CD8-positive, alpha-beta T cell (primary cell): ENCODE measurements at regions of chr10 and their contacts with region 1.

Region 1: GRCh38 chr10:123796586-123797135 is 94.9 kb downstream of the CPXM2 start:
- DNase-seq: no peak
- ATAC-seq: no peak
- H3K4me3 ChIP-seq: no peak overlapping the region
- H3K4me3 Mint-ChIP-seq: no peak overlapping the region
- H3K27ac ChIP-seq: no peak overlapping the region
- H3K27ac Mint-ChIP-seq: no peak overlapping the region
- H3K4me1 ChIP-seq: no peaks in the 10 kb centered on the region
- H3K4me1 Mint-ChIP-seq: no peaks in the 10 kb centered on the region
- H3K27me3 ChIP-seq: no peaks in the 10 kb centered on the region
- H3K27me3 Mint-ChIP-seq: no peaks in the 10 kb centered on the region
- CTCF ChIP-seq: no peak

Region 2: GRCh38 chr10:122298598-122299301 is 1497.9 kb before region 1 on chr10:
- CTCF ChIA-PET with region 1: no interaction called
- POLR2A ChIA-PET with region 1: no interaction called
- intact Hi-C with region 1: no loop called
- DNase-seq: peak; percentile 44 to 79 (median 67)
- ATAC-seq: peak; percentile 86
- H3K4me3 ChIP-seq: no peak overlapping the region
- H3K4me3 Mint-ChIP-seq: no peak overlapping the region
- H3K27ac ChIP-seq: no peak overlapping the region
- H3K27ac Mint-ChIP-seq: no peak overlapping the region
- H3K4me1 ChIP-seq: peaks cover 10% of the 10 kb centered on the region
- H3K4me1 Mint-ChIP-seq: peaks cover 10% of the 10 kb centered on the region
- H3K27me3 ChIP-seq: no peaks in the 10 kb centered on the region
- H3K27me3 Mint-ChIP-seq: peaks cover 2% of the 10 kb centered on the region
- CTCF ChIP-seq: peak; percentile 85

Region 3: DNA sequence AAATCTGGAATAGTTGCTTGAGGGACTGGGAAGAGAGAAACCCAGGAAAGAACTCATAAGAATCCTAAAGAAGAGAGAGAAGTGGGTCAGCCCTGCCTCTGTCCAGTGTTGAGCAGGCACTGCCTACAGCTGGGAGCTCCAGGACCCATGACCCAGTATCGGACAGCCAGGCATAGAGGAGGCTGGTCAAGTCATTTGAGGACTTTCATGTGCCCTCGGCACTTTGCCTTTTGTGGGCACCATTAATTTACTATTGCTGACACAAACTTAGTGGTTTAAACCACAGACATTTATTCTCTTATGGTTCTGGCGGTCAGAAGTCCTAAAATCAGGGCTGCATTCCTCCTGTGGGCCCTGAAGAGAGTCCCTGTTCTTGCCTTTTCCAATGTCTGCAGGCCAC is 34.6 kb after region 1 on chr10:
- CTCF ChIA-PET with region 1: no interaction called
- POLR2A ChIA-PET with region 1: no interaction called
- intact Hi-C with region 1: loop called in 1 of 2 experiments (anchors 1 kb)
- DNase-seq: no peak
- ATAC-seq: no peak
- H3K4me3 ChIP-seq: no peak overlapping the region
- H3K4me3 Mint-ChIP-seq: no peak overlapping the region
- H3K27ac ChIP-seq: no peak overlapping the region
- H3K27ac Mint-ChIP-seq: no peak overlapping the region
- H3K4me1 ChIP-seq: no peaks in the 10 kb centered on the region
- H3K4me1 Mint-ChIP-seq: no peaks in the 10 kb centered on the region
- H3K27me3 ChIP-seq: no peaks in the 10 kb centered on the region
- H3K27me3 Mint-ChIP-seq: peaks cover 11% of the 10 kb centered on the region
- CTCF ChIP-seq: no peak

Region 4: DNA sequence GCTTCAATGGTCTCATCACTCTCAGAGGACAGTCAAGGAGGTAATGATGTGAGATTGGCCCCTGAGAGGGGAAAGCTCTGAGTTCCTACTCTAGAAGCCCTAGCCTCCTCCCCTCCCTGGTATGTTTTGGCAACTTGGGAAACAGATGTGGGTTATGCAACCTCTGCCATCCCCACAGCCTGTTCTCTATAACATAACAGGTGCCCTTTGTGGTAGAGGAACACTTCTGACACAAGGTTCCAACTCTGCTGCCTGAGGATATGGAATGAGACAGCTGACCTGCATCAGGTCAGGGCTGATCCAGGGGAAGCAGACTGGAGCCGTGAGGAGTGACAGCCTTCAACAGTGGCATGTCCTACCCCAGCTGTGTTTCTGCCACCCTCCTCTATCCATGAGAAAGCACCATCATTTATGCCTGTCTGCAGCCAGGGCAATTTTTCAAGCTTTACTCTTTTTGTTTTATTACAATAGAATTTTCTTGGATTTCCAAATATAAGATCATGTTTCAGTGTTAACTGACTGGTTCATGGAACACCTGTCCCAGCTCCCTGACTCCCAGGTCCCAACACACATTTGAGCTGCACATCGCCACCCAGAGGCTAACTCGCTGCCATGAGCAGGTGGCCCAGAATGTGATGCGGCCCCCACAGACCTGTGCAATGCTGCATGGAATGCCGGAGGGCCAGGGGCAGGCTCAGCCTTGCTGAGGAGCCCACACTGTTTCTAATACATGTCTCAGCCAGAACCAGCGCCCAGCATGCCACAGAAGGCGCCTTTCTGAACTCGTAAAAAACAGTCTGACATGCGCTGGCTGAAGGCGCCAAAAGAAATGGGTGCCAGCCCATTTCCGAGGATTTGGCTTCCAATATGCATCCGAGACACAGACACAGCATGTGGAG is 421.5 kb after region 1 on chr10:
- CTCF ChIA-PET with region 1: no interaction called
- POLR2A ChIA-PET with region 1: no interaction called
- intact Hi-C with region 1: no loop called
- DNase-seq: no peak
- ATAC-seq: no peak
- H3K4me3 ChIP-seq: no peak overlapping the region
- H3K4me3 Mint-ChIP-seq: no peak overlapping the region
- H3K27ac ChIP-seq: no peak overlapping the region
- H3K27ac Mint-ChIP-seq: no peak overlapping the region
- H3K4me1 ChIP-seq: no peaks in the 10 kb centered on the region
- H3K4me1 Mint-ChIP-seq: peaks cover 2% of the 10 kb centered on the region
- H3K27me3 ChIP-seq: peaks cover 0 to 2% of the 10 kb centered on the region in 2 experiments
- H3K27me3 Mint-ChIP-seq: peaks cover 2% of the 10 kb centered on the region
- CTCF ChIP-seq: no peak